ENCODE measurements at regions of chr20 and their contacts with region 1.

Region 1: DNA sequence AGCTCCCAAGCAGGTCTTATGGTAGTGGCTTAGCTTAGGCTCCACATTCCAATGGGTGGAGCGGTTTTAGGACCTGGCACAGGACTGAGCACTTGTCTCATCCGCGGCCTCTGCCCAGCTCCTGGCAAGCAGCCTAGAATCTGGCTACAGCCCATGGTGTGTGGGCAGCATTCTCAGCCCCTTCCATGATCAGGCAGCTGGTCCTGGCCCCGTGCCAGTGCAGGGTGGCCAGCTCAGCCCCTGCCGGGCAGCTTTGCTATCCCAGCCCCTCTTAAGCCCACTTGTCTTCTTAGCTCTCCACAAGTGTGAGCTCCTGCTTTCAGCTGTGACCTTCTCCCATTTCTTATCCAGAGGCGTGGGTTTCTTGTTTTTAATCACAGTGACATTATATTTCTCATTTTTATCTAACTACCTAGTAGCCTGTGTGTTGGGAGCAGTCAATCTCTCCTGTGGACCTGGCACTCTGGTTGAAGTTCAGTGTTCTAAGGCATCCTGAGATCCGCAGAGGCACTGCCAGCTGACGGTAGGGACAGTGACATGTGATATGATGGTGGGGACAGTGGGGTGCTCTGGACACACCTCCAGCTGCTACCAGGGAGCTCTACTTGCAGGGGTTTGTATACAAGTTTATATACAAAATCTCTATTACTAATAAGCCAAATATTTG is 119.9 kb upstream of the PRND start:
- DNase-seq: no peak
- H3K4me3 ChIP-seq: no peak overlapping the region
- H3K27me3 ChIP-seq: no peaks in the 10 kb centered on the region
- CTCF ChIP-seq: no peak

Region 2: GRCh38 chr20:3980260-3981131 is 621.3 kb before region 1 on chr20:
- CTCF ChIA-PET with region 1: no interaction called
- POLR2A ChIA-PET with region 1: no interaction called
- DNase-seq: peak; percentile 25
- H3K4me3 ChIP-seq: peak overlapping the region; percentile 2; the same call in 1 of the 2 replicates
- H3K27me3 ChIP-seq: no peaks in the 10 kb centered on the region
- CTCF ChIP-seq: no peak

Region 3: GRCh38 chr20:4244700-4245485 is 356.9 kb before region 1 on chr20:
- CTCF ChIA-PET with region 1: interaction called, 15 read pairs
- POLR2A ChIA-PET with region 1: no interaction called
- DNase-seq: no peak
- H3K4me3 ChIP-seq: no peak overlapping the region
- H3K27me3 ChIP-seq: no peaks in the 10 kb centered on the region
- CTCF ChIP-seq: no peak

Region 4: GRCh38 chr20:4585104-4585753 is 16.5 kb before region 1 on chr20:
- CTCF ChIA-PET with region 1: no interaction called
- POLR2A ChIA-PET with region 1: no interaction called
- DNase-seq: no peak
- H3K4me3 ChIP-seq: no peak overlapping the region
- H3K27me3 ChIP-seq: no peaks in the 10 kb centered on the region
- CTCF ChIP-seq: no peak

Region 5: GRCh38 chr20:4748847-4749246 is 147.1 kb after region 1 on chr20:
- CTCF ChIA-PET with region 1: no interaction called
- POLR2A ChIA-PET with region 1: no interaction called
- DNase-seq: no peak
- H3K4me3 ChIP-seq: no peak overlapping the region
- H3K27me3 ChIP-seq: peaks cover 11% of the 10 kb centered on the region
- CTCF ChIP-seq: no peak

Measured in BJ (cell line).